ENCODE measurements at regions of chr4 and their contacts with region 1.

Region 1: DNA sequence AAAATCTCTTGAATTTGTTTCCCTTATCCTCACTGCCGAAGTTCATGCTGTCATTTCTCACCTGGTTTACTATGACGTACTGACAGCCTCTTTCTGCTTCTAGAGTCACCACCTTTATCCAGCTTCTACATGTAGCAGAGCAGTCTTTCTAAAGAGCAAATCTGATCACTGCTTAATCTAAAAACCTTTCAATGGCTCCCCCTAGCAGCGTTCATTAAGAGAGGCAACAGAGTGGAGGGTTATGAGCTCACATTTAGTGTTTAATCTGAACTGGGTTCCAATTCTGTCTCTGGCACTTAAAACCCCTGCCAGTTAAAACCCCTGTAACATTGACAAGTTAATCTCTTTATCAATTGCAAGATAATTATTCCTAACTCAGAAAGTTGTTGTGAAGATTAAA is 4.4 kb downstream of the RBPJ start:
- DNase-seq: no peak
- ATAC-seq: peak; percentile 12
- H3K4me3 Mint-ChIP-seq: no peak overlapping the region
- H3K27ac Mint-ChIP-seq: no peak overlapping the region
- H3K4me1 Mint-ChIP-seq: peaks cover 28% of the 10 kb centered on the region
- H3K27me3 Mint-ChIP-seq: no peaks in the 10 kb centered on the region
- CTCF ChIP-seq: no peak

Region 2: GRCh38 chr4:25993395-25994185 is 331.6 kb before region 1 on chr4:
- CTCF ChIA-PET with region 1: interaction called, 12 read pairs
- POLR2A ChIA-PET with region 1: no interaction called
- intact Hi-C with region 1: loop called (anchors 1 kb)
- DNase-seq: no peak
- ATAC-seq: peak; percentile 70
- H3K4me3 Mint-ChIP-seq: no peak overlapping the region
- H3K27ac Mint-ChIP-seq: no peak overlapping the region
- H3K4me1 Mint-ChIP-seq: peaks cover 8% of the 10 kb centered on the region
- H3K27me3 Mint-ChIP-seq: no peaks in the 10 kb centered on the region
- CTCF ChIP-seq: no peak

Region 3: GRCh38 chr4:26028793-26029567 is 296.2 kb before region 1 on chr4:
- CTCF ChIA-PET with region 1: interaction called, 10 read pairs
- POLR2A ChIA-PET with region 1: interaction called, 5 read pairs
- intact Hi-C with region 1: loop called (anchors 1 kb)
- DNase-seq: peak; percentile 55
- ATAC-seq: peak; percentile 92
- H3K4me3 Mint-ChIP-seq: no peak overlapping the region
- H3K27ac Mint-ChIP-seq: no peak overlapping the region
- H3K4me1 Mint-ChIP-seq: peaks cover 2% of the 10 kb centered on the region
- H3K27me3 Mint-ChIP-seq: peaks cover 13% of the 10 kb centered on the region
- CTCF ChIP-seq: no peak

Region 4: DNA sequence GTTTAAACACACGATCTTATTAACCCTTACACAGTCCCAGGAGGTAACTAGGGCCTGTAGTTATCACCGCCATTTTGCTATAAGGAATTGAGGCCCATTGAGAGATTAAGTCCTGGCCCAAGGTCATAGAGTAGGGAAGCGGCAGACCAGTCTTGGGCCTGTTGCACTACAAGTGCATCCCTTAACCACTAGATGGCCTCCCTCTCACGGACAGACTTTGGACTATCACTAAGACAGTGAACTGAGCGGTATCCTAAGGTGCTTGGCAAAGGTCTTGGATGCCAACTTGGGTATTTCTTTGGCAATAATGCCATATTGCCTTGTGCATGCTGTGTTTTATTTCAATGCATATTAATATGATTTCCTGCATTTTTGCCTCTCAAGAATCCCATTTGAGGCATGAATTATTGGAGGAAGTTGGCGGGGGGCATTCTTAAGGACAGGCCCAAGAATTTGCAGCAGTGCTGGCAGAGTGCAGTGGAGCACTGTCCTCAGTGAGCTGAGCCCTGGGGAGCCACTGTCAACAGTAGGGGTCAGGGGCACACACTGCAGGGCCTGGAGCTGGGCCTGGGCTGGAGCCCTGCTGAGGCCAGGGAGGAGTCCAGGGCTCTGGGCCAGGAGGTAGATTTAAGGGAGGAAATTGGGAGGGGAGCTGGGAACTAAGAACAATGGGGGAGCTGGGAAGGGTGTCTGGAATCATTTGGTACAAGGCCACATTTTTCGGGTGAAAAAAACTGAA is 263.8 kb before region 1 on chr4:
- CTCF ChIA-PET with region 1: interaction called, 8 read pairs
- POLR2A ChIA-PET with region 1: no interaction called
- intact Hi-C with region 1: loop called (anchors 1 kb)
- DNase-seq: no peak
- ATAC-seq: peak; percentile 58
- H3K4me3 Mint-ChIP-seq: no peak overlapping the region
- H3K27ac Mint-ChIP-seq: no peak overlapping the region
- H3K4me1 Mint-ChIP-seq: no peaks in the 10 kb centered on the region
- H3K27me3 Mint-ChIP-seq: peaks cover 2% of the 10 kb centered on the region
- CTCF ChIP-seq: no peak